ENCODE measurements at regions of chr1 and their contacts with region 1.

Region 1: GRCh38 chr1:89762779-89763648 is 57.8 kb upstream of the LRRC8D start:
- DNase-seq: peak; percentile 95

Region 2: GRCh38 chr1:89483010-89483756 is 279.8 kb before region 1 on chr1:
- intact Hi-C with region 1: loop called (anchors 1 kb)
- DNase-seq: peak; percentile 80

Region 3: GRCh38 chr1:89524369-89525168 is 238.4 kb before region 1 on chr1 and contains the start of gene LRRC8B:
- intact Hi-C with region 1: loop called (anchors 10 kb)
- DNase-seq: peak; percentile 98
- total RNA-seq, gene LRRC8B: 4.5 TPM

Region 4: DNA sequence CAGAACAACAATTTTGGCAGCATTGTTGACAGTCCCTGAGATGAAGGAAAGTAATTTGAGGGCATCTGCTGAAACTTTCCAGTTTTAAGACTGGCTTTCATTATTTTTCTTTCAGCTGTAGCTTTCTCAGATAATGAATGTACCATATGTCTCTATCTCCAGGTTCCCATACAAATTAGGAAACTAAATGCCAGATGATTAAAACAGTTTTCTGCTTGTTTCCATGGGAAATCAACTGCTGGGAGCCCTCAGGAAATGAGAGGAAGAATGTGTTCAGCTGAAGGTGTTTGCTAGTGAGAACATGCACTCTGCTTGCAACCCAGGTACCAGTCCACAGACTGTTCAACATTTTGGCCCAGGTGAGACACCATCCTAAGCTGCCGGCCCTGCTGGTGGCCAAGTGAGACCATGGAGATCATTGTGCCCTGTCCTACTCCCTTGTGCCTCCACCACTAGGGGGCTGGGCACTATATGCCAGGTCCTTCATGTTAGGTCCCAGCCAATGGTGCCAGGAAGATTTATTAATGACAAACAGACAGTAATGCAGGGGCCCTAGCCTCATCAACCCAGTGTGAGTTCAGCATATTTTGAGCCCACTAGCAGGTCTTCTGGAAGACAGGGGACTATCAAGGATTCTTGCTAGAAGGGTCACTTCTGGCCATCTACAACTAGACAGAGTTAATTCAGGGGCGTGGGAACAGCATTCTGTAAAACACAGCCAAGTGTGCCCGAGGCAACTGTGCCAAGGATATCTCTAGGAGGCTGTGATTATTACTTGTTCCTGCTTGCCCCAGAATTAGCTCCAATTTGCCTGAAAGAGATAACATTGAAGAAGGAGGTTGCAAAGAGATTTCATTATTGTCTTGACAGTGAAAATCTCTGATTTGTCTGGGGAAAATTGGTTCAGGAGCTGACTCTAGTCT is 147.1 kb before region 1 on chr1:
- intact Hi-C with region 1: loop called (anchors 5 kb)
- DNase-seq: no peak

Region 5: GRCh38 chr1:89890085-89890752 is 127.2 kb after region 1 on chr1:
- intact Hi-C with region 1: no loop called
- DNase-seq: no peak

Measured in cardiac septum (tissue), 1 donor.